ENCODE measurements at regions of chr16 and their contacts with region 1.

Region 1: GRCh38 chr16:29720699-29721098 is 25.1 kb downstream of the C16orf54 start:
- H3K4me3 ChIP-seq: no peak overlapping the region
- H3K27ac ChIP-seq: no peak overlapping the region
- H3K4me1 ChIP-seq: no peaks in the 10 kb centered on the region
- CTCF ChIP-seq: no peak

Region 2: DNA sequence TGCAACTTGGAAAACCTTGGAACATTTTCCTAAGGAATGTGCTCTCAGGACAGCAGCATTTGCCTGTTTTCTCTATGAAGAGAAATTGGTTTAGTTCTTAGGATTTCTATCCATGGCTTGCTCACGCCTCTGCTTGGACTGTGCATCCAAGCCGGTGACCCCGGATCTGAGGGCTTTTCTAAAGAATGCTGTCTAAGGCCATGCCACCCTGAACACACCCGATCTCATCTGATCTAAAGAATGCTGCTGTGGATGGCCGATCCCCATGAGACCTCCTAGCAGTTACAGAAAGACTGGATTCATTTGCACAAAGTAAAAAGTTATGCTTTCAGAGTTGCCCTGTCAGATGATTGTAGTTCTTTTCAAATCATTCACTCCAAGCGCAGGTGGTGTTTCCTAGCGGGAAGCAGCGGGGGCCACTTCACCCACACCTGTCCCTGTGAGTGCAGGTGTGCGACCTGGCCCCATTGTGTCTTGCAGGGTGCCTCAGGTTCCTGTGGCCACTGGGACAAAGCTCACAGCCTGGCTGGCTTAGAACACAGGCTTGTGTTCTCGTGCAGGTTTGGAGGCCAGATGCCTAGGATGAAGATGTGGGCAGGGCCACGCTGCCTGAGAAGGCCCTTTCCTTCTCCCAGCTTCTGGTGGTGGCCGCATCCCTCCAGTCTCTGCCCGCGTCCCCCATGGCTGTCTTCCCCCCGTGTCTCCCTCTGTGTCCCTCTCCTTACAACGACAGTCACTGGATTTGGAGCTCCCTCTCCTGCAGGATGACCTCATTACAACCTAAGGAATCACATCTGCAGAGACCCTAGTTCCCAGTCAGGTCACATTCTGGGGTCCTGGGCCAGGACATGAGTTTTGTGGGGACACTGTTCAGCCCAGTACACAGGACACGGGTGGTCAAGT is 404.8 kb before region 1 on chr16:
- CTCF ChIA-PET with region 1: no interaction called
- POLR2A ChIA-PET with region 1: no interaction called
- H3K4me3 ChIP-seq: no peak overlapping the region
- H3K27ac ChIP-seq: no peak overlapping the region
- H3K4me1 ChIP-seq: no peaks in the 10 kb centered on the region
- CTCF ChIP-seq: no peak

Region 3: GRCh38 chr16:29700253-29700987 is 20.3 kb before region 1 on chr16:
- CTCF ChIA-PET with region 1: interaction called, 47 read pairs
- POLR2A ChIA-PET with region 1: interaction called, 4 read pairs
- H3K4me3 ChIP-seq: no peak overlapping the region
- H3K27ac ChIP-seq: no peak overlapping the region
- H3K4me1 ChIP-seq: no peaks in the 10 kb centered on the region
- CTCF ChIP-seq: peak; percentile 75